ENCODE measurements at regions of chr1 and their contacts with region 1.

Region 1: DNA sequence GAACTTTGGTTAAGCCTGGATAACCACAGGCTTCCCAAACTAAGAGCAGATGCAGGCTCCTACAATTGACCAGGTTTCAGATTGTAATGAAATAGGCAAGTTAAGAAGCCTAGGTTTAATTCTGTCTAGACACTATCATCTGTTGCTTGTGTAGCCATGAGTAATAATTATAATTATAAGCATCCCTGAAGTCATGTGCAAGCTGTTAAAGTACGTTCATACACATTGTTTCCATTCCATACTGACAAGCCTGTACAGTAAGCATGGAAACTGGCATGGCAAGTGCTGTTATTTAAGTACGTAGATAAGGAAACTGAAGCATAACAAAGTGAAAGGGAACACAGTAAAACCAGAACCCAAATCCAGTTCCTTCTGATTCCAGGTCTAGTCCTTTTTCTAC is 557.2 kb upstream of the BEND5 start:
- ATAC-seq: no peak
- H3K4me3 ChIP-seq: no peak overlapping the region
- H3K27ac ChIP-seq: no peak overlapping the region
- H3K4me1 ChIP-seq: no peaks in the 10 kb centered on the region

Region 2: DNA sequence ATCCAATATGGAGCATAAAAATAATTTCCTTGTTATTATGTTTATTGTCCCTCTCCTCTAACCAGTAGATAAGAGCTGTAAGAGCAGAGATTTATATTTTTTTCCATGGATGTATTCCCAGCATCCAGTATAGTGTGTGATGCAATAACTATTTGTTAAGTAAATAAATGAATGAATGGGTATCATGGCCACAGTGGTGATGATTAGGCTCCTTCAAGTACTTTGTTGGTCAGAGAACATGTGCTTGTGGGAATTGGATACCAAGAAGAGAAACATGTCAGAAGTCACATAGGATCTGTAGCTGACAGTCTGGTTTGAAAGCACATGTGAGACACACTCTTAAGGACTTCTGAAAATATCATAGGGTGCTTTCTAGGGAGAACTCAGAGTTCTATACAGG is 101.4 kb after region 1 on chr1:
- in situ Hi-C with region 1: loop called in 1 of 9 experiments (anchors 25 kb)
- ATAC-seq: no peak
- H3K4me3 ChIP-seq: no peak overlapping the region
- H3K27ac ChIP-seq: no peak overlapping the region
- H3K4me1 ChIP-seq: no peaks in the 10 kb centered on the region

Measured in motor neuron (in vitro differentiated cells).